OCI-LY7 (cell line): ENCODE measurements at regions of chr4 and their contacts with region 1.

Region 1: GRCh38 chr4:2787230-2788088 is 5.4 kb upstream of the SH3BP2 start:
- DNase-seq: peak; percentile 72
- H3K4me3 ChIP-seq: peak overlapping the region; percentile 14
- H3K27ac ChIP-seq: peak overlapping the region; percentile 51
- H3K4me1 ChIP-seq: peaks cover 37% of the 10 kb centered on the region
- CTCF ChIP-seq: peak; percentile 63

Region 2: DNA sequence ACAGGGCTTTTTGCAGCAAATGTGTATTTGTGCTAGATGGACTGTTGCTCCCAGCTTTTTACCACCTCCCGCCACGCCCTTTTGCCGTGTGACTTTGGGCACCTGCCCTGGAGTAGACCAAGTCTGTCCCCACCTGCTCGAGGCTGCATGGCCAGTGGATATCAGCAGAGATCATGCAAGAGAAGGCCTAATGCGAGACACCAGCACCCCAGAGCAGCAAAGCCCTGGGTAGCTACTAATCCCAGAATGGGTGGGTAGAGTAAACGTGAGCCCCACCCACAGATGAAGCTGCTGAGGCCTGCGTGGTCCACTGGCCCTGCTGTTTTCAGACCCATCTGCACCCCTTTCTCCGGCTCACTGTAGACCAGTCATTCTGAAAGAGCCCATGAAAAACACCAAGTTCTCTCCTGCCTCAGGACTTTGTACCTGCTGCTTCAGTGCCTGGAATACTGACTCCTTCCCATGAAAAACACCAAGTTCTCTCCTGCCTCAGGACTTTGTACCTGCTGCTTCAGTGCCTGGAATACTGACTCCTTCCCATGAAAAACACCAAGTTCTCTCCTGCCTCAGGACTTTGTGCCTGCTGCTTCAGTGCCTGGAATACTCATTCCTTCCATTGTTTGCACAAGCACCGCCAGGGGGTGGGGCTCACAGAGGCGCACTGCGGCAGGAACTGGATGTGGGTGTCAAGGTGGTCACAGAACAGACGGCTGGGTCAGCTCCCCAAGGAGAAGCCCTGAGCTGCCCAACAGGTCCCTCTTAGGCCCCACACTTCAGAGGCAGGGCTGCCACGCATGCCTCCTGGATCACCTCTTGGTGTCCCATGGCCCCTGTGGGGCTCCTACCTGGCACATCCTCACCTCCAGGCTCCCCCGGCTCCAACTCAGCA is 26.2 kb before region 1 on chr4:
- CTCF ChIA-PET with region 1: no interaction called
- POLR2A ChIA-PET with region 1: interaction called, 10 read pairs
- intact Hi-C with region 1: no loop called
- DNase-seq: no peak
- H3K4me3 ChIP-seq: no peak overlapping the region
- H3K27ac ChIP-seq: no peak overlapping the region
- H3K4me1 ChIP-seq: peaks cover 12% of the 10 kb centered on the region
- CTCF ChIP-seq: no peak

Region 3: GRCh38 chr4:2798399-2799223 is 11.2 kb after region 1 on chr4:
- CTCF ChIA-PET with region 1: no interaction called
- POLR2A ChIA-PET with region 1: interaction called, 13 read pairs
- intact Hi-C with region 1: no loop called
- DNase-seq: peak; percentile 47
- H3K4me3 ChIP-seq: no peak overlapping the region
- H3K27ac ChIP-seq: no peak overlapping the region
- H3K4me1 ChIP-seq: peaks cover 31% of the 10 kb centered on the region
- CTCF ChIP-seq: no peak

Region 4: GRCh38 chr4:2811830-2812611 is 24.6 kb after region 1 on chr4:
- CTCF ChIA-PET with region 1: interaction called, 5 read pairs
- POLR2A ChIA-PET with region 1: interaction called, 4 read pairs
- intact Hi-C with region 1: loop called (anchors 2 kb)
- DNase-seq: peak; percentile 88
- H3K4me3 ChIP-seq: peak overlapping the region; percentile 67
- H3K27ac ChIP-seq: peak overlapping the region; percentile 48
- H3K4me1 ChIP-seq: peaks cover 33% of the 10 kb centered on the region
- CTCF ChIP-seq: no peak

Region 5: GRCh38 chr4:2837904-2838496 is 50.5 kb after region 1 on chr4:
- CTCF ChIA-PET with region 1: no interaction called
- POLR2A ChIA-PET with region 1: interaction called, 13 read pairs
- intact Hi-C with region 1: no loop called
- DNase-seq: peak; percentile 82
- H3K4me3 ChIP-seq: peak overlapping the region; percentile 56
- H3K27ac ChIP-seq: peak overlapping the region; percentile 70
- H3K4me1 ChIP-seq: peaks cover 54% of the 10 kb centered on the region
- CTCF ChIP-seq: no peak